HEK293T (cell line): ENCODE measurements at regions of chr1 and their contacts with region 1.

Region 1: GRCh38 chr1:47179017-47179987 is 10.5 kb downstream of the PDZK1IP1 start:
- DNase-seq: peak; percentile 89

Region 2: DNA sequence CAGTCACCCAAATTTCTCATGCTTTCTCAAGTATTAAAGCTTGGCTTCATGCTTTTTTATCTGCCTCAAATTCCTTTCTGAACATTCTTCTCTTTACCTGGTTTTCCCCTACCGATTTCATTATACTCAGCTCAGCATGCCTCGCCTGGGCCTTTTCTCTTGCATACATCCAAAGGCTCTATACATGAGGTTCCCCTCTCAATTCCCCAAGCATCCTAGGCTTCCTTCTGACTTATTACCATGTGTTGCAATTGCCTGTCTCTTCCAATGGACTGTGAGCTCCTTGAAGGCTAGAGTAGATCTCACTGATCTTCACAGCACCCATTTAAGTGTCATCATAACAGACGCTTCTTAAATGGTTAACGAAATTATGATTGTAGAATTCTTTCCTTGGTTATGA is 66.1 kb before region 1 on chr1:
- CTCF ChIA-PET with region 1: no interaction called
- POLR2A ChIA-PET with region 1: no interaction called
- DNase-seq: no peak

Region 3: GRCh38 chr1:47192458-47193384 is 13.4 kb after region 1 on chr1:
- CTCF ChIA-PET with region 1: interaction called, 16 read pairs
- POLR2A ChIA-PET with region 1: interaction called, 18 read pairs
- DNase-seq: peak; percentile 83

Region 4: GRCh38 chr1:47201179-47201578 is 21.9 kb after region 1 on chr1:
- CTCF ChIA-PET with region 1: interaction called, 10 read pairs
- POLR2A ChIA-PET with region 1: interaction called, 7 read pairs
- DNase-seq: no peak

Region 5: GRCh38 chr1:47262787-47263413 is 83.6 kb after region 1 on chr1:
- CTCF ChIA-PET with region 1: interaction called, 39 read pairs
- POLR2A ChIA-PET with region 1: interaction called, 19 read pairs
- DNase-seq: peak; percentile 57

Region 6: GRCh38 chr1:47313915-47314664 is 134.8 kb after region 1 on chr1 and contains the start of gene STIL:
- CTCF ChIA-PET with region 1: interaction called, 4 read pairs
- POLR2A ChIA-PET with region 1: interaction called, 19 read pairs
- DNase-seq: peak; percentile 95

Region 7: GRCh38 chr1:47333922-47334764 is 154.8 kb after region 1 on chr1:
- CTCF ChIA-PET with region 1: no interaction called
- POLR2A ChIA-PET with region 1: interaction called, 13 read pairs
- DNase-seq: peak; percentile 86